Prostate gland (tissue), 2 donors: ENCODE measurements at regions of chr18 and their contacts with region 1.

Region 1: GRCh38 chr18:67217551-67218166 is 298.9 kb downstream of the DSEL start:
- DNase-seq: peak; percentile 60
- H3K4me3 ChIP-seq: no peak overlapping the region
- H3K27ac ChIP-seq: no peak overlapping the region
- H3K4me1 ChIP-seq: no peaks in the 10 kb centered on the region
- H3K27me3 ChIP-seq: no peaks in the 10 kb centered on the region
- CTCF ChIP-seq: peak; percentile 52 to 86 (median 81)
- POLR2A ChIP-seq: no peak

Region 2: DNA sequence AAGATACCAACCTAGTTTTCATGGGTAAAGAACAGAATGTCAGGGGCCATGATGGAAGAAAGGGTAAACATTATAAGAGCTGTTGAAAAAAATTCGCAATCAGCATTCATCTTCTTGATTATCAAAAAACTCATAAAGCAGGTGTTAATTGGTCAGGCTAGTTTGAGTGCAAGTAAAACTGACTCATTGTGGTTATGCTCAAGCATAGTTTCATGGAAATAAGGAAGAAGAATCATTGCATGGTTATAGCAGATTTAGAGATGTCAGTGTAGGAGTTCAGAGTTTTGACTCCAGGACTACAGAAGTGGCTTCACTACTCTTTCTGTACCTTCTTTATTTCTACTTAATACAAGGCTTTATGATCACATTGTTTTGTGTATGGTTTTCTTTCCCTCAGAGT is 586.8 kb before region 1 on chr18:
- intact Hi-C with region 1: no loop called
- DNase-seq: no peak
- H3K4me3 ChIP-seq: no peak overlapping the region
- H3K27ac ChIP-seq: no peak overlapping the region
- H3K4me1 ChIP-seq: no peaks in the 10 kb centered on the region
- H3K27me3 ChIP-seq: no peaks in the 10 kb centered on the region
- CTCF ChIP-seq: no peak
- POLR2A ChIP-seq: no peak

Region 3: GRCh38 chr18:67282796-67283195 is 65.1 kb after region 1 on chr18:
- intact Hi-C with region 1: no loop called
- DNase-seq: no peak
- H3K4me3 ChIP-seq: no peak overlapping the region
- H3K27ac ChIP-seq: no peak overlapping the region
- H3K4me1 ChIP-seq: no peaks in the 10 kb centered on the region
- H3K27me3 ChIP-seq: no peaks in the 10 kb centered on the region
- CTCF ChIP-seq: no peak
- POLR2A ChIP-seq: no peak

Region 4: DNA sequence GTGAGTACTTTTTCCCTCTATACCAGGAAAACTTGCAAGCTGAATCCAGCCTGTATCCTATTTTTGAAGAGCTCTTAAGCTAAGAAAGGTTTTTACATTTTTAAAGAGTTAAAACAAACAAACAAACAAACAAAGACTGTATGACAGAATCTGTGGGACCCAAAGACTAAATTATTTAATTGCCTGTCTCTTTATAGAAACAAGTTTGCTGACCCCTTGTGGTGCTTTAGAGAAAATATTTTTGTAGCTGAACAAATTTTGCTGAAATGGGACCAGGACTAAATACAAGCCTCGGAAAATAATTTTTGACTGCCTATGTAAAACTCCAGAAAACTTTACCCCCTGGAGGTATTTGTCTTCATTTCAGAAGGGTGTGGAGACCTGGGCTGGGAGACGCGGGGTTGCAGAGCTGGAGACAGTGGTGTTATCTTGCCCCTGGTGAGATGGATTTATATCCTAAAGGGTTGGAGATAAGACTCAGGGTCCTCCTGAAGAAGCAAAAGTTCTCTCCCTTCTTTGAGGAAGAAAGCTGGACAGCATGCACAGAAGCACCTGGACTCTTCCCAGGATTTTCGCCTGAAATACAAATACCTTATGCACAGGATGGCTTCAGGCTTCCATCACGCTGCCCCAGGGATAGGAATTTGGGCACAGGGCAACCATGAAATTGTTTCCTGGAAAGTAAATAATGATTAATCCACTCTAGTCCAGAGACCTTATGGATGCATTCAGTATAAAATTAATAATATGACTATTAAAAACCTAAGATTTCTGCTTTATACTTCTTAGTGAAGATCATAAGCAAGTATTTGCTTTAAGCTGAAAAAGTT is 1442.9 kb after region 1 on chr18:
- intact Hi-C with region 1: loop called (anchors 5 kb)
- DNase-seq: no peak
- H3K4me3 ChIP-seq: no peak overlapping the region
- H3K27ac ChIP-seq: no peak overlapping the region
- H3K4me1 ChIP-seq: no peaks in the 10 kb centered on the region
- H3K27me3 ChIP-seq: no peaks in the 10 kb centered on the region
- CTCF ChIP-seq: peak in 3 of 4 experiments; percentile 49 to 60 (median 51)
- POLR2A ChIP-seq: no peak